Activated CD4-positive, alpha-beta memory T cell treated with anti-CD3 and anti-CD28 coated beads for 36 hours (primary cell): ENCODE measurements at regions of chr2 and their contacts with region 1.

Region 1: DNA sequence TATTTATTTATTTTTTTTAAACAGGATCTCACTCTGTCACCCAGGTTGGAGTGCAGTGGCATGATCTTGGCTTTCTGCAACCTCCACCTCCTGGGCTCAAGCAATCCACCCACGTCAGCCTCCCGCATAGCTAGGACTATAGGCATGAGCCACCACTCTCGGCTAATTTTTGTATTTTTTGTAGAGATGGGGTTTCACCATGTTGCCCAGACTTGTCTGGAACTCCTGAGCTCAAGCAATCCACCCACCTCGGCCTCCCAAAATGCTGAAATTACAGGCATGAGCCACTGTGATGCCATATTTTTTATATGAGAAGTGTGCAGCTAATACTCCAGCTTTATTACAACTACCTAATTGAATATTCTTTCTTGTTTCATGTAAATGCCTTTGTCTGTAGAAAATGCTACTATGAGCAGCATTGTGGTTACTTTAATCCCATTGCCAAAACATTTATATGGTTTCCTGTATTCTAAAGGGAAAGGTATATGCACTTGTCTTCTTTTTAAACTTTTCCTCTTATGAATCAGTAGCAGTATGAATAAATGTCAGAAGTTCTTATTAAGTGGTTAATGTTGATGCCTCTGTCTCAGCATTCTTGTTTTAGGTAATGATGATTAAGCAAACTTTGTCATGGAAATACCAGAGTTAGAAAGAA is 9.5 kb upstream of the BCL2L11 start:
- DNase-seq: peak; percentile 57
- H3K4me3 Mint-ChIP-seq: no peak overlapping the region
- H3K27ac Mint-ChIP-seq: no peak overlapping the region
- H3K4me1 Mint-ChIP-seq: peaks cover 28% of the 10 kb centered on the region
- H3K27me3 Mint-ChIP-seq: peaks cover 58% of the 10 kb centered on the region

Region 2: GRCh38 chr2:110777531-110778311 is 333.5 kb before region 1 on chr2:
- CTCF ChIA-PET with region 1: no interaction called
- POLR2A ChIA-PET with region 1: no interaction called
- intact Hi-C with region 1: no loop called
- DNase-seq: no peak
- H3K4me3 Mint-ChIP-seq: no peak overlapping the region
- H3K27ac Mint-ChIP-seq: no peak overlapping the region
- H3K4me1 Mint-ChIP-seq: no peaks in the 10 kb centered on the region
- H3K27me3 Mint-ChIP-seq: peaks cover 34% of the 10 kb centered on the region

Region 3: DNA sequence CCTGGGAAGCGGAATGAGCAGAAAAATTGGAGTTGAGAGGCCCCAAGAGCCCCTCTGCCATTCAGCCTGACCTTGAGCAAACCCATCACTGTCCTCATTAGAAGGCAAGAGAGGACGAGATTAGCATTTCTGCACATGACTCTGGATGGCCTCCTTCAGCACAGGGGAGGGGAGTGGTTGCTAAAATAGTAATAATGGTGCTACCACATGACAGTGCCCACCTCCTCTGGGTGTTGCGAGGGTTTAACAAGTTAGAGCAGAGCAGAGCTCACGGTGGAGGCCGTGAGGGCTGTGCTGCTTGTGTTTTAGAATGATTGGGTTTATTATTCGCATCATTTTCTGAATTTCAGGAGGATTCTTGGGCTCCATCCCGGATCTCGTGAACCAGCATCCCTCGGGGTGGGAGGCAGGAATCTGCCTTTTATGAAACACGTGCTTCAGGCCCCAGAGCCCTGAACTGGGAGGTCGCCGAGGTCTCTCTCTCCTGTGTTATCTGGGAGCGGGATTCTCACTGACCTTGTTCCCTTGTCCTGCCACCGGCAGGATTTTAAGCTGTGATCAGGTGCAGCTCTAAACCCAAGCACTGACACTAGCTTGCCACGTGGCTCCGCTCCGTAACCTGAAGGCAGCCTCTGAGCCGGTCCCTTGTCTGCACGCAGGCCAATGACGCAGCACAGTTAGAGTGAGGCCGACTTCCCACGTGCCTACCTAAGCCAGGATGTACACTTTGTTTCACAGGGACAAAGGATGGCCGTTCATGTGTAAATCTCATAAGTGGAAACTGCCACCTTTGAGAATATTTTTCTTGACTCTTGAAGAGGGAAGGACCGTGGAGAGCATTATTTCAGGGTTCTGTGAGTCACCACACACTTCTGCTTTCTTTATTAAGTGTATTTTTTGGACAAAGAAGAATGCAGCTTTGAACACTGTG is 236.5 kb before region 1 on chr2:
- CTCF ChIA-PET with region 1: no interaction called
- POLR2A ChIA-PET with region 1: no interaction called
- intact Hi-C with region 1: no loop called
- DNase-seq: no peak
- H3K4me3 Mint-ChIP-seq: no peak overlapping the region
- H3K27ac Mint-ChIP-seq: no peak overlapping the region
- H3K4me1 Mint-ChIP-seq: peaks cover 10% of the 10 kb centered on the region
- H3K27me3 Mint-ChIP-seq: peaks cover 42% of the 10 kb centered on the region

Region 4: GRCh38 chr2:110925479-110925878 is 185.7 kb before region 1 on chr2:
- CTCF ChIA-PET with region 1: no interaction called
- POLR2A ChIA-PET with region 1: no interaction called
- intact Hi-C with region 1: no loop called
- DNase-seq: no peak
- H3K4me3 Mint-ChIP-seq: no peak overlapping the region
- H3K27ac Mint-ChIP-seq: no peak overlapping the region
- H3K4me1 Mint-ChIP-seq: no peaks in the 10 kb centered on the region
- H3K27me3 Mint-ChIP-seq: peaks cover 3% of the 10 kb centered on the region

Region 5: DNA sequence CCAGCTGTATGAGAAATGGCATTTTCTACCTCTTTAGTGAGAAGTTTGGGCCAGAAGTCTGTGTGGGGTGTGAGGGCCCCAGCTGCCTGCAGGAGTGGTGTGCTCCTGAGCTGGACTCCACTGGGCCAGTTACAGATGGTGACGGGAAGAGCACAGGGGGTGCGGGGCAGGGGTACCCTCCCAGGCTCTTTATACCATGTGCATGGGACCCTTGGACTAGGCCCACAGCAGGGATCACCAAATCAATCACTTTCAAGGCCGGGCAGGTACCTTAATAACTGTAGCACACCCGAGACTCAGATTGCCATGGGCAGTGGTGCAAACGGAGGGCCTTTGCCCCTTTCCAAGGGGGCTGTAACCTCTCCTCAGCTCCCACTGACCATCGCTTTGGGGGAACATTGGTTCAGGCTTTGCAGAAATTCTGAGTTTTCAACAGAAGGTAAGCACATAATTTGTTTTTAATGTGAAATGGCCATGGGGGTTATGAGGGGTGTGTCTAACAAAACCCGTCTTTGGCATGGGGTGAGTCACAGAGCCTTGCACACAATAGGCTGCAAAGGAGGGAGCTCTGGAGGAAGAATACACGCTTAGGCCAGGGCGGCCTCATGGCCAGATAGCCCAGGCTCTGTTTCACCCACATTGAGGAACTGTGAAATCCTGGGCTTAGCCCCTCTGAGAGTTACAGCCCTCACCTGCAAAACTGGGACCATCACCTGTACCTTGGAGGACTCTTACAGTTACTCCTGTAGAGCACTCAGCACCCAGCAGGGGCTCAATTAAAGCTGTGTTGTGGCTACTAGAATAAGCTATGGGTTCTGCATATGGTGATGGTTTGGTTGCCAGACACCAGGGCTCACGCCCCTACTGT is 131.5 kb before region 1 on chr2:
- CTCF ChIA-PET with region 1: no interaction called
- POLR2A ChIA-PET with region 1: no interaction called
- intact Hi-C with region 1: no loop called
- DNase-seq: no peak
- H3K4me3 Mint-ChIP-seq: no peak overlapping the region
- H3K27ac Mint-ChIP-seq: no peak overlapping the region
- H3K4me1 Mint-ChIP-seq: no peaks in the 10 kb centered on the region
- H3K27me3 Mint-ChIP-seq: peaks cover 12% of the 10 kb centered on the region

Region 6: GRCh38 chr2:111049792-111050640 is 61.2 kb before region 1 on chr2:
- CTCF ChIA-PET with region 1: no interaction called
- POLR2A ChIA-PET with region 1: no interaction called
- intact Hi-C with region 1: loop called (anchors 1 kb)
- DNase-seq: peak; percentile 46
- H3K4me3 Mint-ChIP-seq: no peak overlapping the region
- H3K27ac Mint-ChIP-seq: no peak overlapping the region
- H3K4me1 Mint-ChIP-seq: peaks cover 38% of the 10 kb centered on the region
- H3K27me3 Mint-ChIP-seq: peaks cover 65% of the 10 kb centered on the region

Region 7: GRCh38 chr2:111100765-111101162 is 10.5 kb before region 1 on chr2:
- CTCF ChIA-PET with region 1: interaction called, 3 read pairs
- POLR2A ChIA-PET with region 1: interaction called, 3 read pairs
- intact Hi-C with region 1: loop called (anchors 1 kb)
- DNase-seq: peak; percentile 51
- H3K4me3 Mint-ChIP-seq: no peak overlapping the region
- H3K27ac Mint-ChIP-seq: no peak overlapping the region
- H3K4me1 Mint-ChIP-seq: peaks cover 22% of the 10 kb centered on the region
- H3K27me3 Mint-ChIP-seq: peaks cover 38% of the 10 kb centered on the region